ENCODE measurements at regions of chr15 and their contacts with region 1.

Region 1: GRCh38 chr15:64681424-64682024 is 93.9 kb downstream of the RBPMS2 start:
- DNase-seq: no peak

Region 2: DNA sequence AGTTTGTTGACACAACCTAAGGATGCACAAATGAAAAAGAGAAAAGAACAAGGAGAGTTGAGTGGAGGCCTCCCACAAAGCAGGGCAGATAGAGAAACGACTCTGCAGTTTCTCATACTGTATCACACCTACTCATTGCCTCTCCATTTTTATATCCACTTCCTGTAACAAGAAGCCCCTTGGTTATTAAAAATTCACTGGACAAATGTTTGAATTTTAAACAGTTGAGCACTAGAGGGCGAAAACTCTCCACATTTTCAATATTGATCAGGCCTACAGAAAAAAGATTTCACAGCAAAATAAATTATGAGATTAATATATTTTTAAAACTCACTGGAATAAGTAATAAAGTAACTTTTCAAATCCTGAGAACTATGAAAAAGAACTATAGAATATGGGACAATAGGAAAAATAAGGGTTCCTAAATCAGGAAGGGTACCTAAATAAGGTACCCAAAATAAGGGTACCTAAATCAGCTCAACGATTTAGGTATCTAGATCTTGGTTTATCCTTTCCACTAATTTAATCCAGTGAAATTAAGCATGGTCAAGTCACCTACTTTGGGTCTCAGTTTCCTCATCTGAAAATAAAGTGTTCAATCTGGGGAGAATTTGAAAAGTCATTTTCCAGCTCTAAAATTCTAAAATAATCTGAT is 471.7 kb before region 1 on chr15:
- intact Hi-C with region 1: loop called (anchors 10 kb)
- DNase-seq: no peak

Region 3: DNA sequence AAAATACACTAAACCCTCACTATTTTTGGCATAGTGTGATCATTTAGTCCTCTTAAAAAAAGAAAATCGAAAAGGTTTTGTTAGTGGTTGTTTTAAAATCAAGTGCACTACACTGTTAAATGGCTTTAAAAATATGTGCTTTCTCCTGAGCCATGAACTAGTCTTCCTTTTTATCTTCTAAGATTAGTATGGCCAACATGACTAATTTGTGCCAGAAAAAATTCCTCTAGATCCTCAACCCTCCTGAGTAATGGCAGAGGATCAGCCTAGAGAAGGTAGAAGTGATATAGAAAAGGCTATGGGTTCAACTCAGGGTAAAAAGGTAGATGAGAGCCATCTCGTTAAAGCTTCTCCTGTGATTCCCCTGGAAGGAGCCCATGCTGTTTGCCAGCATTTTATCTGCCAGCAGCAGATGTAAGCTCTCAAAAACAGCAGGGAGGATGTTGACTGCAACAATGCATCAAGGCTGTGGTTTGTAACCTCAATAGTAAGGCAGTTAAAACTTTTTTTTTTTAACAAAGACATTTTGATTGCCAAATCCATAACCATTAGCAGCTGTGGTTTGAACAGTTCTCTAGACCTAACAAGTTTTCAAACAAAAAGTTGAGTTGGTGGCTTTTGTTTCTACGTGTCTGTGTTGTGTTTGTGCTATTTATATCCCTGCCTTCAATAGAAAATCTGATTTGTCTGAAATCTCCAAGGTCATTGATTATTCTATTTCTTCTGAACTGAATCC is 251.4 kb before region 1 on chr15:
- intact Hi-C with region 1: loop called (anchors 5 kb)
- DNase-seq: no peak

Region 4: DNA sequence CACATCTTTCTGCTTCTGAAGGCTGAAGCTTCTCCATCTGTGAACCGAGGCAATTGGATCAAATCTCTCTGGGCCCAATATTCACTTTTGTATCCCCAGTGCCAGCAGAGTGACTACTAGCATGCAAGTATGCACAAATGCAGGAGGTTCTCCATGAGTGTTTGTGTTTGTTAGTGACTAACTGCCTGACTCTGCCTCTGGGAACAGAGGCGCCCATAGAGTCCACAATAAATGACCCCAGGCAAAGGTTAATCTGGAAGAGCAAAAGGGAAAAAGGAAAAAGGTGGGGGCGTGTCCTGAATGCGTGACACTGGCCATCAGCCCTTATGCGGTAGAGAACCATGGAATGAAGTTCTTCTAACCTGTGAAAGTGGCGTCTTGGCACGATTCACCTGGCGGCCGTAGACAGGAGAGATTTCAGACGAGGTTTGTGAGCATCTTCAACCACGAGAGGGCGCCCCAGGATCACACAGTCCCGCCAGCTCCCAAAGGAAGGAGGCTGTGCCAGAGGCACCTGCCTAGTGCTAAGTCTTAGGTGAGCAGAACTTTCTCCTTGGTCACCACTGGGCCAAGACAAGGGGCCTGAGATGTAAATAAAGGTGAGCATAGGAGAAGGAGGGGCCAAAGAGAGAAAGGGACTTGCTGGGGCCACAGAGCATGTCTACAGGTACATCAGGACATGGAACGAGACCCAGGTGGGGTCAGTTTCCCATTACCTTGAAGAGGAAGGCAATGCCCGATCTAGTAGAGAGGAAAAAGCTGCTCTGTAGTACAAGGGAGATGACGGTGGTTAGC is 49.7 kb after region 1 on chr15:
- intact Hi-C with region 1: loop called (anchors 1 kb)
- DNase-seq: peak; percentile 93

Region 5: GRCh38 chr15:64809649-64810496 is 128.3 kb after region 1 on chr15:
- intact Hi-C with region 1: loop called (anchors 5 kb)
- DNase-seq: peak; percentile 92

Region 6: DNA sequence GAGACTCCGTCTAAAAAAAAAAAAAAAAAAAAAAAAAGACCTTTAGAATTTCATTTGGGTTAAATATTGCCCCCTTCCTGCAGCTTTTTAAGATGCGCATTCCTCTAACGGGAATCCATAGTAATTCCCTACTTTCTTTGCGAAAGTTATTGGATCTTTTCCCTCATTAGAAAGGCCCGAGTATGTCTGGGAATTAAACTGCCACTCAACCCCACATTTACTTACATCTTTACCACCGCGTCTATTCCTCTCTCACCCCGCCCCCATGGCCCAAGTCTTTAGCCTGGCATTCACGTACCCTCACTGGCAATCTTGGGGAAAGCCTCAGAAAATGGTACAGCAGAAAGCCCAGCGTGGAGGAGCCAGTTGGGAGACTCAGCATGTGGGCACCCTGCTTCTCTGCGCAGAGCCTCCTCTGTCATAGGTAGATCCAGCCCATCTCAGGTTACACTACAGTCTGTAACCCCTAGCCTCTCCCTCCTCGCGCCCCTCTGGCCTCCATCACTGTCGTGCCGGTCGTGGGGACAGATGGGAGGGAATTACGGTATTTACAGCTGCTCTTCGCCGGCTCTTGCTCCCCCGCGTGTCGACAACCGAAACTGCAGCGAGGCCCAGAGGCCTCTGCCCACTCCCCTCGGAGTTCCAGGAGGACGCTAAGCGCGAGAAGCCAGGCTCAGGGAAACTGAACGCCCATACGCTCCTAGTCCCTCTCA is 223.8 kb after region 1 on chr15:
- intact Hi-C with region 1: loop called (anchors 5 kb)
- DNase-seq: peak; percentile 92